Activated CD4-positive, alpha-beta memory T cell treated with anti-CD3 and anti-CD28 coated beads for 36 hours (primary cell): ENCODE measurements at regions of chrX and their contacts with region 1.

Region 1: GRCh38 chrX:48911412-48912182 is at the start of gene SLC35A2:
- DNase-seq: peak; percentile 92
- H3K4me3 Mint-ChIP-seq: peak within 1 kb of the TSS; percentile 98
- H3K27ac Mint-ChIP-seq: peak within 1 kb of the TSS; percentile 96
- H3K4me1 Mint-ChIP-seq: peaks cover 30% of the 10 kb centered on the region
- H3K27me3 Mint-ChIP-seq: no peaks in the 10 kb centered on the region
- total RNA-seq, gene SLC35A2: 16.9 to 19.2 TPM

Region 2: DNA sequence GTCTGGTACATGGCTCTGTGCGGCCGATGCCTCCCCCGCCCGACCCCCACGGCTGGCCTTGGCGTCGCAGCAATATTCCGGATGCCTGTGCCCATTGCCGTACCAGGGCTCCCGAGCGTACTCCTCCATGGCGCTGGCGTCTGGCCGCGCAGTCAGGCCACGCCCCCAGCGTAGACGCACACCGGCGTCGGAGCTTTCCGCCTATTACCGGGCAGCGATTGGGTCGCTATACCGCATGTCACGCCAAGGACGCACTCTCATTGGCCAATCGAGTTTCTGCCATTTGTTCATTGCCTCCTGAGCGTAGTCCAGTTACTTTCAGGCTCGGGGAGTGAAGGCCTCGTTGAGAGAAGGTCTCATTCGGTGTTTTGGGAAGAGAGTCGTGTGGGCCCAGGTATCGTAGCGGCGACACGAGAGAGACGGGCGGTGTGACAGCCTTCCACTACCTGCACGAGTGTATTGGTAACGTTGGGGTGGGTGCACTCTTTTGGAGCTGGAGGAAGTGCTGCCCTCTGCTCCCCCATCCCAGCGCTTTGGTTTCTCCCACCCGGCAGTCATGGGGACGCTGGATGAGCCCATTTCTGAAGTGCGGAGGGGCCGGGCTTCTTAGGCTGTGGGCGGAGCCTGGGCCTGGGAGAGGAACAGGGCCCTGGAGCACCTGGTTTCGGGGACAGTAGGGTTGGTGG is 13.8 kb before region 1 on chrX and contains the starts of genes PQBP1 and TIMM17B:
- CTCF ChIA-PET with region 1: no interaction called
- POLR2A ChIA-PET with region 1: interaction called, 32 read pairs
- intact Hi-C with region 1: loop called (anchors 1 kb)
- DNase-seq: peak; percentile 91
- H3K4me3 Mint-ChIP-seq: peak within 1 kb of the TSS; percentile 79
- H3K27ac Mint-ChIP-seq: peak within 1 kb of the TSS; percentile 88
- H3K4me1 Mint-ChIP-seq: peaks cover 16% of the 10 kb centered on the region
- H3K27me3 Mint-ChIP-seq: no peaks in the 10 kb centered on the region
- total RNA-seq, gene PQBP1: 85.0 to 85.5 TPM
- total RNA-seq, gene TIMM17B: 83.8 to 86.6 TPM

Region 3: DNA sequence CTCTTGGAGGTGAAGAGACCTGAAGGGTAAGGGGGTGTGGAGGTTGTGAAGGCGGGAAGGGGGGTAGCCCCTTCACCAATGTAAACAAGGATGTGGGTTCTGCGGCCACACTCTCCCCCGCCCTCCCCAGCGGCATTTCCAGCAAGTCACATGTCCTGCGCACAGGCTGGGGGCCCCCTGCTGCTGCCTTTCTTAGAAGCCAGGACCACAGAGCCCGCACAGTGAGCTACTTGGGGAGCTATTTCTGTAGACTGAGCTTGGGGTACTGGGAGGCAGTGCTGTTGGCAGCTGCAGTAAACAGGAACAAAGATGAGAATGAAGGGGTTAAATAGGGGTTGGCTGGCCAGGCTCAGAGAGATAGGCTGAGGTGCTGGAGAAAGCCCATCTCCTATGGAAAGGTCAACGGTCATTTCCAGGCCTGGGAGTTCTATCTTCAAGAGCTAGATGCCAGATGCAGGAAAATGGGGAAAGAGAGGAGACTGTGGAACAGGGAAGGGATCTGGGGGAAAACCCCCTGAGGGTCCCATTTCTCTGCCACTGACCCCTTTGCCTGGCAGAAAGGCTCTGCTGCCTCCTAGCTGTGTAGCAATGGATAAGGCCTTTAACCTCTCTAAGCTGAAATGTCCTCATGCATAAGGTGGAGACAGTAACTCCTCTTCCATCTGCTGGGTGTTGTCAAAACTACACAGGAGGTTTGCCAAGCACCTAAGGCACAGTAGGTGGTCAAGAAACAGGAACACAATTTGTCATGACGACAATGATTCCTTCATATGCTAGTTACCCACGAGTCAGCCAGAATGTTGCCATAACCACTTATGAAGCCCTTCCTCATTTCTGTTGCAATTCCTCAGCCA is 25.7 kb after region 1 on chrX:
- CTCF ChIA-PET with region 1: interaction called, 13 read pairs
- POLR2A ChIA-PET with region 1: interaction called, 286 read pairs
- intact Hi-C with region 1: no loop called
- DNase-seq: peak; percentile 95
- H3K4me3 Mint-ChIP-seq: peak overlapping the region; percentile 75
- H3K27ac Mint-ChIP-seq: peak overlapping the region; percentile 97
- H3K4me1 Mint-ChIP-seq: peaks cover 79% of the 10 kb centered on the region
- H3K27me3 Mint-ChIP-seq: no peaks in the 10 kb centered on the region

Region 4: GRCh38 chrX:48945516-48946348 is 34.1 kb after region 1 on chrX:
- CTCF ChIA-PET with region 1: interaction called, 17 read pairs
- POLR2A ChIA-PET with region 1: interaction called, 286 read pairs
- intact Hi-C with region 1: no loop called
- DNase-seq: peak; percentile 65
- H3K4me3 Mint-ChIP-seq: no peak overlapping the region
- H3K27ac Mint-ChIP-seq: peak overlapping the region; percentile 67
- H3K4me1 Mint-ChIP-seq: peaks cover 49% of the 10 kb centered on the region
- H3K27me3 Mint-ChIP-seq: no peaks in the 10 kb centered on the region

Region 5: GRCh38 chrX:48957827-48958634 is 46.4 kb after region 1 on chrX:
- CTCF ChIA-PET with region 1: no interaction called
- POLR2A ChIA-PET with region 1: interaction called, 11 read pairs
- intact Hi-C with region 1: no loop called
- DNase-seq: peak; percentile 95
- H3K4me3 Mint-ChIP-seq: peak overlapping the region; percentile 99
- H3K27ac Mint-ChIP-seq: peak overlapping the region; percentile 100
- H3K4me1 Mint-ChIP-seq: peaks cover 32% of the 10 kb centered on the region
- H3K27me3 Mint-ChIP-seq: no peaks in the 10 kb centered on the region

Region 6: GRCh38 chrX:48981178-48981577 is 69.6 kb after region 1 on chrX:
- CTCF ChIA-PET with region 1: no interaction called
- POLR2A ChIA-PET with region 1: no interaction called
- intact Hi-C with region 1: no loop called
- DNase-seq: no peak
- H3K4me3 Mint-ChIP-seq: no peak overlapping the region
- H3K27ac Mint-ChIP-seq: no peak overlapping the region
- H3K4me1 Mint-ChIP-seq: no peaks in the 10 kb centered on the region
- H3K27me3 Mint-ChIP-seq: no peaks in the 10 kb centered on the region